ENCODE measurements at regions of chr10 and their contacts with region 1.

Region 1: GRCh38 chr10:133219782-133220181 is 10.2 kb upstream of the UTF1 start:
- DNase-seq: peak; percentile 57 to 82
- H3K4me3 ChIP-seq: peak overlapping the region in 3 of 4 experiments; percentile 17 to 34 (median 29); a peak in 3 of 8 replicates
- H3K27ac ChIP-seq: no peak overlapping the region
- H3K4me1 ChIP-seq: peaks cover 0 to 15% (median 12%) of the 10 kb centered on the region in 4 experiments; a peak in 6 of 7 replicates
- H3K27me3 ChIP-seq: no peaks in the 10 kb centered on the region
- CTCF ChIP-seq: no peak
- EP300 ChIP-seq: no peak
- POLR2A ChIP-seq: no peak
- RAD21 ChIP-seq: no peak

Region 2: DNA sequence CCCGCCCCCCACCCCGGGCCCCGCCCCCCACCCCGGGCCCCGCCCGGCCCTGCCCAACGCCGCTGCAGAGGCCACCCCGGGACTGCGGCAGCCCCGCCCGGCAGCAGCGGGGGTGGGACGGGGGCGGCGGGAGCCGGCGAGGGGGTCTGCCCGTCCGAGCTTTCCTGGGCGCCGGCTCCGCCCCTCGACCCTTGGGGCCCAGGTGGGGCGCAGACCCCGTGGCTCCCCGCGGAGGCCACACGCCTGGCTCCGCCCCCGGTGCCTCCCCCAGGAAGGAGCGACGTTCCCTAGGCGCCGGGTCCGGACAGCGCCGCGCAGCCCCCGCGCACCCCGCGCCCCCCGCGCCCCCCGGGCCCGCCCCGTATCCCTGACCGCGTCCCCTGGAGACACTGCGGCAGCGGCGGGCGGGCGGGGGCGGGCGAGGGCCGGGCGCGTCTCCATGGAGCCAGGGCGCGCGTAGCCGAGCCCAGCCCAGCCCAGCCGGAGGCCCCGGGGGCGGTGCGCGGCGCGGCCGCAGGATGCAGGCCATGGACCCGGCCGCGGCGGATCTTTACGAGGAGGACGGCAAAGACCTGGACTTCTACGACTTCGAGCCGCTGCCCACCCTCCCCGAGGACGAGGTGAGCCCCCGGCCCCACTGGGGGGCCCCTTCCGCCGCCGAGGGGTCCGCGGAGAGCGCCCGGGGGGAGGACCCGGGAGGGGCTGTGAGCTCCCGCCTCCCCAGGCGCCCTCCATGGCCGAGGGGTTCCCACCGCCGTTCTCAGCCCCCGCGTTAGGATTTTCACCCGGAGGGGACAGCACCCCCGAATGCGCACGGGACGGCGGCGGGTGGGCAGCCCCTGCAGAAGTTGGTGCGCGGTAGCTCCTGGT is 59.6 kb before region 1 on chr10 and contains the start of gene KNDC1:
- CTCF ChIA-PET with region 1: interaction called, 10 read pairs
- POLR2A ChIA-PET with region 1: no interaction called
- DNase-seq: no peak
- H3K4me3 ChIP-seq: peak within 1 kb of the TSS; percentile 53 to 94 (median 63)
- H3K27ac ChIP-seq: no peak within 1 kb of the TSS
- H3K4me1 ChIP-seq: peaks cover 3 to 51% (median 23%) of the 10 kb centered on the region in 4 experiments
- H3K27me3 ChIP-seq: peaks cover 0 to 3% (median 0%) of the 10 kb centered on the region in 4 experiments; a peak in 2 of 7 replicates
- CTCF ChIP-seq: no peak
- EP300 ChIP-seq: no peak
- POLR2A ChIP-seq: no peak
- RAD21 ChIP-seq: no peak
- total RNA-seq, gene KNDC1: 16.7 and 19.3 TPM in 2 replicates

Region 3: GRCh38 chr10:133173860-133174640 is 45.7 kb before region 1 on chr10:
- CTCF ChIA-PET with region 1: no interaction called
- POLR2A ChIA-PET with region 1: no interaction called
- DNase-seq: no peak
- H3K4me3 ChIP-seq: no peak overlapping the region
- H3K27ac ChIP-seq: no peak overlapping the region
- H3K4me1 ChIP-seq: no peaks in the 10 kb centered on the region
- H3K27me3 ChIP-seq: no peaks in the 10 kb centered on the region
- CTCF ChIP-seq: no peak
- EP300 ChIP-seq: no peak
- POLR2A ChIP-seq: no peak
- RAD21 ChIP-seq: no peak

Region 4: GRCh38 chr10:133299738-133300137 is 80.0 kb after region 1 on chr10:
- CTCF ChIA-PET with region 1: no interaction called
- POLR2A ChIA-PET with region 1: no interaction called
- DNase-seq: no peak
- H3K4me3 ChIP-seq: no peak overlapping the region
- H3K27ac ChIP-seq: no peak overlapping the region
- H3K4me1 ChIP-seq: no peaks in the 10 kb centered on the region
- H3K27me3 ChIP-seq: no peaks in the 10 kb centered on the region
- CTCF ChIP-seq: no peak
- EP300 ChIP-seq: no peak
- POLR2A ChIP-seq: no peak
- RAD21 ChIP-seq: no peak

Region 5: DNA sequence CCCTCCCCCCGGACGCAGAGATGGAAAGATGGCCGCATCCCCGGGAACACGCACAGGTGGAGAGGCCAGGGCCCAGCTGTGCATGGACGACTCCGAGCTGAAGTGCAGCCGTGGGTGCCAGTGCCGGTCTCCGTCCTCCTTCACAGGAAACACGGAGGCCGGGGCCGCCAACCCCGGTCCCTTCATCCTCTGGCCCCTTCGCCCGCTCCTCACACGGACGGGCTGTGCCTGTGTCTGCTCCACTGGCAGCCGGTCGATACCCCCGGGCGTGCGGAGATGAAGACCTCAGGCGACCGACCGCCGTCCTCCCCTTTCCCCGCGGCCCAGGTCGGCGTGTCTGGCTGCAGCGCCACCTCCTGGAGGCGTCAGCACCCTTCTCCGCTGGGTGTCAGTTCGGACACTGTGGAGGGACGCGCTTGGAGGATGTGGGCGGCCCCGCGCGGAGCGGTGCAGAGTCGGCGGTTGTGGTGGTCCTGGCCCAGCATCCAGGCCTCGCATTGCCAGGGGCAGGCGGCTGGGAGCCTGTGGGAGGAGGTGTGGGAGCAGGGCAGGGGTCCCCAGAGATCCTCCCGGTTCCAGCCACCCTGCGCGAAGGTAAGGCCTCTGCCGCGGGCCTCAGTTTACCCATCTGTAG is 98.8 kb after region 1 on chr10:
- CTCF ChIA-PET with region 1: no interaction called
- POLR2A ChIA-PET with region 1: no interaction called
- DNase-seq: peak in 1 of 2 experiments; percentile 89
- H3K4me3 ChIP-seq: peak overlapping the region; percentile 35 to 62 (median 44)
- H3K27ac ChIP-seq: no peak overlapping the region
- H3K4me1 ChIP-seq: no peaks in the 10 kb centered on the region; a peak in 1 of 7 replicates
- H3K27me3 ChIP-seq: peaks cover 0 to 8% (median 4%) of the 10 kb centered on the region in 4 experiments; a peak in 5 of 7 replicates
- CTCF ChIP-seq: peak; percentile 85 to 96 (median 91)
- EP300 ChIP-seq: no peak
- POLR2A ChIP-seq: peak in 1 of 2 experiments; percentile 58; a peak in 1 of 3 replicates
- RAD21 ChIP-seq: peak; percentile 41 to 57; a peak in 3 of 4 replicates